Heart left ventricle (tissue), 16 donors: ENCODE measurements at regions of chr1 and their contacts with region 1.

Region 1: GRCh38 chr1:78408810-78409209 is 82.0 kb upstream of the PTGFR start:
- DNase-seq: no peak
- ATAC-seq: peak in 1 of 4 donors; percentile 50
- H3K4me3 ChIP-seq: no peak overlapping the region
- H3K27ac ChIP-seq: peak overlapping the region in 1 of 12 donors; percentile 13
- H3K4me1 ChIP-seq: no peaks in the 10 kb centered on the region
- H3K27me3 ChIP-seq: no peaks in the 10 kb centered on the region
- CTCF ChIP-seq: no peak
- POLR2A ChIP-seq: no peak

Region 2: GRCh38 chr1:77794550-77794949 is 614.3 kb before region 1 on chr1:
- intact Hi-C with region 1: no loop called
- DNase-seq: no peak
- ATAC-seq: no peak
- H3K4me3 ChIP-seq: no peak overlapping the region
- H3K27ac ChIP-seq: no peak overlapping the region
- H3K4me1 ChIP-seq: no peaks in the 10 kb centered on the region
- H3K27me3 ChIP-seq: no peaks in the 10 kb centered on the region
- CTCF ChIP-seq: no peak
- POLR2A ChIP-seq: no peak

Region 3: GRCh38 chr1:78292361-78292760 is 116.4 kb before region 1 on chr1:
- intact Hi-C with region 1: no loop called
- DNase-seq: peak in 1 of 5 donors; percentile 29
- ATAC-seq: peak in 2 of 4 donors; percentile 24 to 70
- H3K4me3 ChIP-seq: no peak overlapping the region
- H3K27ac ChIP-seq: no peak overlapping the region
- H3K4me1 ChIP-seq: no peaks in the 10 kb centered on the region
- H3K27me3 ChIP-seq: no peaks in the 10 kb centered on the region
- CTCF ChIP-seq: no peak
- POLR2A ChIP-seq: no peak

Region 4: GRCh38 chr1:78340006-78340405 is 68.8 kb before region 1 on chr1:
- intact Hi-C with region 1: loop called in 1 of 10 experiments (anchors 10 kb)
- DNase-seq: no peak
- ATAC-seq: peak in 1 of 4 donors; percentile 34
- H3K4me3 ChIP-seq: no peak overlapping the region
- H3K27ac ChIP-seq: peak overlapping the region in 1 of 12 donors; percentile 37
- H3K4me1 ChIP-seq: no peaks in the 10 kb centered on the region
- H3K27me3 ChIP-seq: no peaks in the 10 kb centered on the region
- CTCF ChIP-seq: no peak
- POLR2A ChIP-seq: no peak

Region 5: DNA sequence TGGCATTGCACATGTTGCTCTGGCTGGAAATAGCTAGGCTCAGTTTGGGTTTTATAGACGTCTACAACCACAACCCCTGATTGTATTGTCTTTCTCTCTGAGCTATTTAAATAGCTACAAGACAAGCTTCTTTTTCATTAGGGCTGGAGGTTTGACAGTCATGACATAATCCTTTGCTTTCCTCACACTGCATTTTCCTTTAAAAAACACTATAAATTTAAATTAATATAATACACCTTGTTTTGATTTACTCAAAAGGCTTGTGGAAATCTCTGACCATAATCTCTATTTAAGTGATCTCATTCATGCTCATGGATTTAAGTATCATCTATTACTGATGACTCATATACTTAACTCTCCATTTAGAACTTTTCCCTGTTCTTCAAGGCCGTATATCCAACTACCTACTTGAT is 31.6 kb after region 1 on chr1:
- intact Hi-C with region 1: no loop called
- DNase-seq: no peak
- ATAC-seq: no peak
- H3K4me3 ChIP-seq: no peak overlapping the region
- H3K27ac ChIP-seq: no peak overlapping the region
- H3K4me1 ChIP-seq: no peaks in the 10 kb centered on the region
- H3K27me3 ChIP-seq: no peaks in the 10 kb centered on the region
- CTCF ChIP-seq: no peak
- POLR2A ChIP-seq: no peak

Region 6: GRCh38 chr1:78540048-78540447 is 131.2 kb after region 1 on chr1:
- intact Hi-C with region 1: no loop called
- DNase-seq: no peak
- ATAC-seq: no peak
- H3K4me3 ChIP-seq: no peak overlapping the region
- H3K27ac ChIP-seq: no peak overlapping the region
- H3K4me1 ChIP-seq: no peaks in the 10 kb centered on the region
- H3K27me3 ChIP-seq: no peaks in the 10 kb centered on the region
- CTCF ChIP-seq: no peak
- POLR2A ChIP-seq: no peak